Ovary (tissue), 10 donors: ENCODE measurements at regions of chr2 and their contacts with region 1.

Region 1: GRCh38 chr2:70403267-70404053 is 101.6 kb upstream of the FAM136A start:
- DNase-seq: no peak
- H3K4me3 ChIP-seq: no peak overlapping the region
- H3K27ac ChIP-seq: no peak overlapping the region
- H3K4me1 ChIP-seq: no peaks in the 10 kb centered on the region
- H3K27me3 ChIP-seq: no peaks in the 10 kb centered on the region
- CTCF ChIP-seq: no peak
- EP300 ChIP-seq: no peak
- POLR2A ChIP-seq: no peak

Region 2: GRCh38 chr2:70472221-70472890 is 68.9 kb after region 1 on chr2:
- intact Hi-C with region 1: loop called in 1 of 4 experiments (anchors 2 kb)
- DNase-seq: no peak
- H3K4me3 ChIP-seq: no peak overlapping the region
- H3K27ac ChIP-seq: no peak overlapping the region
- H3K4me1 ChIP-seq: no peaks in the 10 kb centered on the region
- H3K27me3 ChIP-seq: no peaks in the 10 kb centered on the region
- CTCF ChIP-seq: no peak
- EP300 ChIP-seq: no peak
- POLR2A ChIP-seq: no peak

Region 3: GRCh38 chr2:70797506-70797905 is 394.0 kb after region 1 on chr2:
- intact Hi-C with region 1: no loop called
- DNase-seq: no peak
- H3K4me3 ChIP-seq: no peak overlapping the region
- H3K27ac ChIP-seq: no peak overlapping the region
- H3K4me1 ChIP-seq: no peaks in the 10 kb centered on the region
- H3K27me3 ChIP-seq: no peaks in the 10 kb centered on the region
- CTCF ChIP-seq: no peak
- EP300 ChIP-seq: no peak
- POLR2A ChIP-seq: no peak